Gastrocnemius medialis (tissue), 4 donors: ENCODE measurements at regions of chr20 and their contacts with region 1.

Region 1: GRCh38 chr20:17898548-17898994 is 70.0 kb downstream of the SNX5 start:
- DNase-seq: peak; percentile 40 to 59
- ATAC-seq: peak; percentile 51 to 81
- H3K4me3 ChIP-seq: no peak overlapping the region
- H3K27ac ChIP-seq: no peak overlapping the region
- H3K4me1 ChIP-seq: peaks cover 19 to 23% of the 10 kb centered on the region in 2 donors
- H3K27me3 ChIP-seq: no peaks in the 10 kb centered on the region
- CTCF ChIP-seq: peak; percentile 84 to 94 (median 85)
- POLR2A ChIP-seq: no peak

Region 2: GRCh38 chr20:17749975-17750721 is 148.4 kb before region 1 on chr20:
- in situ Hi-C with region 1: no loop called
- intact Hi-C with region 1: loop called (anchors 5 kb)
- DNase-seq: peak; percentile 36 to 53
- ATAC-seq: peak; percentile 84 to 85
- H3K4me3 ChIP-seq: no peak overlapping the region
- H3K27ac ChIP-seq: peak overlapping the region; percentile 18 to 52 (median 49)
- H3K4me1 ChIP-seq: peaks cover 0 to 7% of the 10 kb centered on the region in 2 donors
- H3K27me3 ChIP-seq: no peaks in the 10 kb centered on the region
- CTCF ChIP-seq: no peak
- POLR2A ChIP-seq: no peak

Region 3: DNA sequence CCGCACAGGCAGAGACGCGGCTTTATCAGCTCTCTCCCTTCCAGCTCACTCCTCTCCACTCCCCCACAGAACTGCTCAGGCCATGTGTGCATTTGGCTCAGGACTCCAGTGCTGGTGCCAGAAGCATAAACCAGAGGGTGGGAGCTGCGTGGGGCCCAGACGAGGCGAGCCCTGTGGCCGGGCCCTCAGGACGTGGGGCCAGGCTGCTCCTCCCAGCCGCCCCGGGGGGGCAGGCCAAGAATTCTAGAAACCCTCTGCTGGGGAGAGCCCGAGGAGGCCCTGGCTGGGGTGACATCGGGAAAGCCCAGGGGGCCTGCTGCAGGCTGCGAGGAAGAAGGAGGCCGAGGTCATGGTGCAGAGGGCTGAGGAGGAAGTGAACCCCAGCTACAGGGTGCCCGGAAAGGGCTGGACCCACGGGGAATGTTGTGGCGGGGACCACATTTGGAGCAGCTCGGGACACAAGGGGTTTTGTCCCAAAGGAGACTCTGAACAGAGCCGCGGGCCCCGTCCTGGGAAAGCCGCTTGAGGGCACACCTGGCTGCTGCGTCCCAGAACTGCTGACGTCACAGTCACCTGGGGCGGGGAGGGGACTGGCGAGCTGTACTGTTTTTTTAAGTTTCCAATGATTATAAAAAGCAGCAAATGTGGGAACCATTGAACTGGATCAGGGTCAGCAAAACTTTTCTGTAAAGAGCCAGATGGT is 91.7 kb before region 1 on chr20:
- in situ Hi-C with region 1: no loop called
- intact Hi-C with region 1: loop called (anchors 1 kb)
- DNase-seq: peak; percentile 10 to 33
- ATAC-seq: peak in 1 of 2 donors; percentile 32
- H3K4me3 ChIP-seq: peak overlapping the region in 2 of 4 donors; percentile 24 to 37
- H3K27ac ChIP-seq: peak overlapping the region; percentile 53 to 67 (median 59)
- H3K4me1 ChIP-seq: peaks cover 14 to 20% of the 10 kb centered on the region in 2 donors
- H3K27me3 ChIP-seq: no peaks in the 10 kb centered on the region
- CTCF ChIP-seq: no peak
- POLR2A ChIP-seq: no peak

Region 4: DNA sequence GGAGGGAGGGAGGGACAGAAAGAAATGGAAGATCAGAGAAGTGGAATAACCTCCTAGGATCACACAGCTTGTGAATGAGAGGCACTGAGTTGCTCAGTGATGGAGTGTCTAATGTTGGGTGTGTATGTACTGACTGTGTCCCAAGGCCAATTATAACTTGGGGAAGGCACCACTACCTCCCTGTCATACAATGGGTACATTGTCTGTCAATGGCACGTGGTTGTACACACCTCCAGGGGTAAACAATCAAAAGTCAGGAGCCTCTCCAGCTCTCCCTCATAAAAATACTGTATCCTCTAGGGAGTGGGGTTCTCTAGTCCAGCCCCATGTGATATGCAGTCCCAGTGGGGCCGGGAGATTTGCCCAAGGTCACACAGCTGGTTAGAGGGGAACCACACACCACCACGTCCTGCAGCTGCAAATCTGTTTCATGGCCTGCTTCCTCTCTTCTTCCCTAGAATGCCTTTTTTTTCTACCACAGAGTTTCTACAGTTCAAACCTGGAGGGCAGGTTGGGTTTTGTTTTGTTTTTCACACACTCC is 42.5 kb before region 1 on chr20:
- in situ Hi-C with region 1: no loop called
- intact Hi-C with region 1: loop called (anchors 5 kb)
- DNase-seq: no peak
- ATAC-seq: no peak
- H3K4me3 ChIP-seq: no peak overlapping the region
- H3K27ac ChIP-seq: no peak overlapping the region
- H3K4me1 ChIP-seq: peaks cover 0 to 11% of the 10 kb centered on the region in 2 donors
- H3K27me3 ChIP-seq: no peaks in the 10 kb centered on the region
- CTCF ChIP-seq: no peak
- POLR2A ChIP-seq: no peak